ENCODE measurements at regions of chr2 and their contacts with region 1.

Region 1: GRCh38 chr2:85288244-85288725 is 39.5 kb downstream of the TGOLN2 start:
- DNase-seq: no peak
- H3K4me3 ChIP-seq: no peak overlapping the region
- CTCF ChIP-seq: no peak
- POLR2A ChIP-seq: no peak

Region 2: GRCh38 chr2:85066874-85067351 is 221.4 kb before region 1 on chr2:
- intact Hi-C with region 1: loop called (anchors 5 kb)
- DNase-seq: peak; percentile 65 to 94
- H3K4me3 ChIP-seq: no peak overlapping the region
- CTCF ChIP-seq: peak in 1 of 3 donors; percentile 24
- POLR2A ChIP-seq: no peak

Region 3: GRCh38 chr2:85132834-85133637 is 155.2 kb before region 1 on chr2 and contains the start of gene TCF7L1:
- intact Hi-C with region 1: loop called (anchors 5 kb)
- DNase-seq: peak; percentile 66 to 97
- H3K4me3 ChIP-seq: peak within 1 kb of the TSS; percentile 60
- CTCF ChIP-seq: peak in 1 of 3 donors; percentile 59
- POLR2A ChIP-seq: no peak
- total RNA-seq, gene TCF7L1: 0.67 to 4.8 (median 1.9) TPM

Region 4: DNA sequence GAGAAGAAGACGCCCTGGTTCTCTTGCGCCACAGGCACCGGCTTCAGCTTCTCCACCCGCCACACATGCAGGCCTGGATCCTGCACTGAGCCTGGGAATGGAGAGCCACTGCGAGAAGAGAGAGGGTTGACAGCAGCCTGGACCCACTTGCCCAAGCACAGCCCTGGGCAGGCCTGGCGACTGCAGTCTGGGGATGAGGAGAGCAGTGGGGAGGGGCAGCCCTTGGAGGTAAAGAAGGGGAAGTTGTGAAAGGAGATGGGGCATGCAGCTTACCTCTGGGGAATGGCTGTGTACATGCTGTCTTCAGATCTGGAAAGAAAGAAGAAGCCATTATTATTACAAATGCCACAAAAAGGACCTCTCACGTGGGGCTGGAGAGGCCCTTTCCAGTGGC is 113.6 kb after region 1 on chr2:
- intact Hi-C with region 1: no loop called
- DNase-seq: no peak
- H3K4me3 ChIP-seq: no peak overlapping the region
- CTCF ChIP-seq: no peak
- POLR2A ChIP-seq: no peak